Panc1 (cell line): ENCODE measurements at regions of chr11 and their contacts with region 1.

Region 1: DNA sequence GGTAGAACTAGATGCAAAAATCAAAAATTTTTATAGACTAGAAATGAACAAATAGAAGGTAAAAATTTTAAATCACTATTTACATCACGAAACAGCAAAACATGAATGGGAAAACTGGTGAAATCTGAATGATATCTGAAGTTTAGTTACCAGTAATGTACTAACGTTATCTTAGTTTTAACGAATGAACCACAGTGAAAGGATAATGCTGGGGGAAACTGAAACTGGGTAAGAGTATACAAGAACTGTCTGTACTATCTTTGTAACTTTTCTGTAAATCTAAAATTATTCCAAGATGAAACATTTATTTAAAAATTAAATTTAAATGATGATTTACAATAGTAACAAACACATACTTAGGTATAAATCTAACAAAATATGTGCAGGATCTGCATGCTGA is 7.4 kb downstream of the GDPD4 start:
- DNase-seq: no peak
- ATAC-seq: no peak
- H3K4me3 ChIP-seq: no peak overlapping the region
- H3K27ac ChIP-seq: no peak overlapping the region
- H3K4me1 ChIP-seq: no peaks in the 10 kb centered on the region
- H3K27me3 ChIP-seq: no peaks in the 10 kb centered on the region
- CTCF ChIP-seq: no peak

Region 2: GRCh38 chr11:77259641-77260040 is 34.4 kb before region 1 on chr11:
- CTCF ChIA-PET with region 1: no interaction called
- POLR2A ChIA-PET with region 1: interaction called, 10 read pairs
- in situ Hi-C with region 1: no loop called
- intact Hi-C with region 1: no loop called
- DNase-seq: no peak
- ATAC-seq: no peak
- H3K4me3 ChIP-seq: no peak overlapping the region
- H3K27ac ChIP-seq: no peak overlapping the region
- H3K4me1 ChIP-seq: no peaks in the 10 kb centered on the region
- H3K27me3 ChIP-seq: no peaks in the 10 kb centered on the region
- CTCF ChIP-seq: no peak